ENCODE measurements at regions of chr10 and their contacts with region 1.

Region 1: GRCh38 chr10:101650863-101651262 is 44.1 kb downstream of the FBXW4 start:
- DNase-seq: no peak
- H3K4me3 ChIP-seq: no peak overlapping the region
- H3K27ac ChIP-seq: no peak overlapping the region
- H3K4me1 ChIP-seq: no peaks in the 10 kb centered on the region
- H3K27me3 ChIP-seq: no peaks in the 10 kb centered on the region
- CTCF ChIP-seq: no peak
- POLR2A ChIP-seq: no peak

Region 2: GRCh38 chr10:101182936-101183335 is 467.9 kb before region 1 on chr10:
- intact Hi-C with region 1: no loop called
- DNase-seq: no peak
- H3K4me3 ChIP-seq: no peak overlapping the region
- H3K27ac ChIP-seq: no peak overlapping the region
- H3K4me1 ChIP-seq: no peaks in the 10 kb centered on the region
- H3K27me3 ChIP-seq: peaks cover 0 to 8% of the 10 kb centered on the region in 2 donors
- CTCF ChIP-seq: no peak
- POLR2A ChIP-seq: no peak

Region 3: DNA sequence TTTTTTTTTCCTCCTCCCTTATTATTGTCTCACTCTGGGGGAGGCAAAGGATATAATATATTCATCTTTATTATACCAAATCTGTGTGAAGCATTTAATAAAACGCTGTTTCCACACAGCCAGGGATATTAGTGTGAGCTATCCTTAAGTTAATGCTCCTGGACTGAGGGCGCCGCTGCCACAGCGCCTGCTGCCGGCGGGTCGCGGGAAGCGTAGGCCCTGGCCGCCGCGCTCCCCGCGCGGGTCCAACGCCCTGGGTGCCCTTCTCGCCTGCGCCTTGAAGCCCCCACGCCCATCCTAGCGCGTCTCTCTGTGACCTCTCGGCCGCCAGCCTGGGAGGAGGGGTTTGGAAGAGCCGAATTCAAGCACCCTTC is 412.1 kb before region 1 on chr10:
- intact Hi-C with region 1: no loop called
- DNase-seq: no peak
- H3K4me3 ChIP-seq: no peak overlapping the region
- H3K27ac ChIP-seq: no peak overlapping the region
- H3K4me1 ChIP-seq: no peaks in the 10 kb centered on the region
- H3K27me3 ChIP-seq: peaks cover 15 to 73% of the 10 kb centered on the region in 2 donors
- CTCF ChIP-seq: peak in 1 of 3 donors; percentile 23
- POLR2A ChIP-seq: no peak

Region 4: DNA sequence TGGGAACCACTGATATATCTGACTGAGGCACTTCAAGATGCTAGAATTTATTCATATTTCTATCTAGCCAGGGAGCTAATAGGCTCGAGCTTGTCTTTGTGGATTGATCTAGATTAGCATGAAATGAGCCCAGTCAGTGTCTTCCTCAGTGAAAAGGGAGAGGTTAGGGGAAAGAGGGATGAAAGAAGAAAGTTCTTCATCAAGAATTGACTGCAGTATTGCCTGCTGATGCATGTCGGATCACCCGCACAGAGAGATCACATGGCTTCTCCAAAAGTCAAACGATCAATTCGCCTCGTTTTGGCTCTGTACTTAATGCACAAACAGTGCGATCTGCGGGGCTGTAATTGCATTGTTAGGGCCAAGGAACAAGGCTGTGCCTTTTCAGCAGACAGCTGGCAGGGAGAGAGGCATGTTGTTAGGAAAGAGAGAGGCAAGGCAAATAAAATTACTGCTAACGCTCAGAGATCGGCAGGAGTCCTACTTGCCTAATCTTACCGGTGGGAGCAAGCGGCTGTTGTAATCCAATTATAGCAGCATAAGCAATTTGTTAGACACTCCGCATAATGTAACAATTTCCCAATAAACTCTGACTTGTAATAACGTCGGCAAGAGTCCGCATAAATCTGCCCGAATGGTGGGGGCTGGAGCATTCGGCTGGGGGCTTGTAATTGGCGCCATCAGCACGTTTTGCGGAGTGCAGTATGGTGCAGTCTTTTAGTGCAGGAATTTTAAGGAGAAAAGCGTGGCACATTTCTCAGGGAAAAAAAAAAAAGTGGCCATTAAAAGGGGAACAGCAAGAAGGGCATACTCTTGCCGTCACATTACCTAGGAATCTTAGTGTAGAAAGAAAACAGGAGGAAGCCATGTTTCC is 164.9 kb before region 1 on chr10:
- intact Hi-C with region 1: no loop called
- DNase-seq: no peak
- H3K4me3 ChIP-seq: no peak overlapping the region
- H3K27ac ChIP-seq: no peak overlapping the region
- H3K4me1 ChIP-seq: no peaks in the 10 kb centered on the region
- H3K27me3 ChIP-seq: no peaks in the 10 kb centered on the region
- CTCF ChIP-seq: no peak
- POLR2A ChIP-seq: no peak

Region 5: GRCh38 chr10:101629837-101630632 is 20.8 kb before region 1 on chr10:
- intact Hi-C with region 1: loop called (anchors 1 kb)
- DNase-seq: no peak
- H3K4me3 ChIP-seq: no peak overlapping the region
- H3K27ac ChIP-seq: no peak overlapping the region
- H3K4me1 ChIP-seq: no peaks in the 10 kb centered on the region
- H3K27me3 ChIP-seq: no peaks in the 10 kb centered on the region
- CTCF ChIP-seq: no peak
- POLR2A ChIP-seq: no peak

Measured in breast epithelium (tissue), 4 donors.